ENCODE measurements at regions of chr1 and their contacts with region 1.

Region 1: GRCh38 chr1:62841587-62842169 is 57.7 kb downstream of the ATG4C start:
- DNase-seq: peak; percentile 49
- ATAC-seq: peak; percentile 63
- H3K4me3 ChIP-seq: no peak overlapping the region
- H3K27ac ChIP-seq: no peak overlapping the region
- H3K4me1 ChIP-seq: no peaks in the 10 kb centered on the region
- H3K27me3 ChIP-seq: no peaks in the 10 kb centered on the region
- CTCF ChIP-seq: peak; percentile 47 to 69 (median 48); a peak in 5 of 6 replicates
- POLR2A ChIP-seq: no peak
- RAD21 ChIP-seq: peak; percentile 72

Region 2: GRCh38 chr1:62781841-62782543 is 59.7 kb before region 1 on chr1:
- CTCF ChIA-PET with region 1: no interaction called
- POLR2A ChIA-PET with region 1: no interaction called
- RAD21 ChIA-PET with region 1: no interaction called
- intact Hi-C with region 1: no loop called
- DNase-seq: no peak
- ATAC-seq: no peak
- H3K4me3 ChIP-seq: no peak overlapping the region
- H3K27ac ChIP-seq: no peak overlapping the region
- H3K4me1 ChIP-seq: peaks cover 0 to 11% of the 10 kb centered on the region in 2 experiments; a peak in 2 of 4 replicates
- H3K27me3 ChIP-seq: no peaks in the 10 kb centered on the region
- CTCF ChIP-seq: no peak
- POLR2A ChIP-seq: no peak
- RAD21 ChIP-seq: no peak

Region 3: DNA sequence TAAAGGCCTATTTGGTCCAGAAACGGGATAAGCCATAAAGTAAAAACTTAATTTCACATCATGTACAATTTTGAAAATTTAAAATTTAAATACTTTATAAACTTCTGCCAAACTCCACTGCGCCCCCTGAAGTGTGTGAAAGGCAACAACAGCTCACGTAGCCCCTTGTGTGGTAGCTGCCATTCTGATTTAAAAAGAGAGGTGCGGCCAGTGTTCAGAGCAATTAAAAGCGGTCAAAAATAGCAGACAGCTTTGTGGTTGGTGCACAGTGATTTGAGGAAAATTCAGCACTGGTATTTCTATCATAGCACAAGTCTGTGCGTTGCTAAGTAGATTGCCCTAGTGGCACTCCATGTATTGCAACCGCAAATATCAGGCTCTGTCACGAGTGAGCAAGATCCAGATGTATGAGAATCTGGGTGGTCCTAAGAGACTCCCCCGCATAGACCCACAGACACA is 64.8 kb after region 1 on chr1:
- CTCF ChIA-PET with region 1: interaction called, 17 read pairs
- POLR2A ChIA-PET with region 1: no interaction called
- RAD21 ChIA-PET with region 1: interaction called in 1 of 2 experiments, 3 read pairs
- intact Hi-C with region 1: no loop called
- DNase-seq: peak; percentile 21
- ATAC-seq: peak; percentile 93
- H3K4me3 ChIP-seq: no peak overlapping the region
- H3K27ac ChIP-seq: no peak overlapping the region
- H3K4me1 ChIP-seq: no peaks in the 10 kb centered on the region
- H3K27me3 ChIP-seq: no peaks in the 10 kb centered on the region
- CTCF ChIP-seq: peak; percentile 62 to 82 (median 78)
- POLR2A ChIP-seq: no peak
- RAD21 ChIP-seq: peak; percentile 27; the same call in 1 of the 2 replicates

Region 4: DNA sequence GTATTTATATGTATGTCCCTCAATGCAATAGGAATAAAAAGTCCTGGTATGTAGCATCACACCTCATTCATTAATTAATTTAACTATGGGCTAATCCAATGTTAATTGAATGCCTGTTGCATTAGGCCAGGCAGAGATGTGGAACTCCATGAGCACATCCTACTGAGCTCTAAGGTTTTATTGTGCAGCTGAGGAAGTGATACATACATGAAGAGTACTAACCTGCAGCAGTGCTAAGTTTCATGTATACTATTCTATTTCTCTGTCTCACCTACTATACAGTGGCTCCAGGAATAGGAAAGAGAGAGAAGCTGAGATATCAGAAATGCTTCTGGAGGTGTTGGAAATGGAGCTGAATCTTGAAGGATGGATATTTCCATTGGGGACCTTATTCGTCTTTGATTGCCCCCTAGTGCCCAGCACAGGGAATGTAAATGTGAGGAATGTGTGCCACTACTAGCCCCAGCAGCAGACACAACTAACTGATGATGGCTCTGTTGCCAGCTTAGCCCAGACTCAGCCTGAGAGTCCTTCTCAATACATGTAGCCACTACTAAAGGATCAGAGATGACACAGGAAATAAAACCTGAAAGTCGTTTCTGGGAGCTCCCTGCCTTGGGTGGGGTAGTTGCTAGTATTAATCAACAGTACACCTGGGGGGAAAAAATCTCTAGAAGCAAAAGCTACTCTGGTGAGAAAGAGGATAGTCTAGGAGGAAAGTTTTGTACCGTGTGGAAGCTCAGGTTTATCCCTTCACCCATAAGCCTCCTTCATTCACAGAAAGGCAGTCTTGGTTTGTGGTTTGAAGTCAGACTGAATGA is 307.4 kb after region 1 on chr1:
- CTCF ChIA-PET with region 1: interaction called, 12 read pairs
- POLR2A ChIA-PET with region 1: no interaction called
- RAD21 ChIA-PET with region 1: interaction called in 1 of 2 experiments, 3 read pairs
- intact Hi-C with region 1: loop called (anchors 10 kb)
- DNase-seq: peak; percentile 40
- ATAC-seq: peak; percentile 97
- H3K4me3 ChIP-seq: no peak overlapping the region
- H3K27ac ChIP-seq: no peak overlapping the region
- H3K4me1 ChIP-seq: no peaks in the 10 kb centered on the region
- H3K27me3 ChIP-seq: peaks cover 45% of the 10 kb centered on the region
- CTCF ChIP-seq: peak; percentile 48 to 79 (median 79); a peak in 5 of 6 replicates
- POLR2A ChIP-seq: no peak
- RAD21 ChIP-seq: peak; percentile 65

Region 5: DNA sequence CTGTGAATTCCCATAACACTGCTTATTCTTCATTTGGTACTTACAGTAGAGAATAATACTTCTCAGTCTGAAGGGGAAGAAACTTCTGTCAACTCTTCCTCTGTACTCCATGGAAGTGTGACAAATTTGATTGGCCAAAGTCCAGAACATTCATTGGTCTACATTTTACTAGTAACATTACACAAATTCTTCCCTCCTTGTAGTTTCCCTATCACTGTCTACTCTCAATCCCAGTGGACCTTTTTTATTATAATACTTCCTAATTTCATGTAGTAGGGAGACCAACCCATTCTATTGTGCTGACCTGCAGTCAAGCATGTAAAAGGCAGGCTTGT is 600.4 kb after region 1 on chr1:
- CTCF ChIA-PET with region 1: no interaction called
- POLR2A ChIA-PET with region 1: no interaction called
- RAD21 ChIA-PET with region 1: no interaction called
- intact Hi-C with region 1: loop called (anchors 10 kb)
- DNase-seq: no peak
- ATAC-seq: no peak
- H3K4me3 ChIP-seq: no peak overlapping the region
- H3K27ac ChIP-seq: no peak overlapping the region
- H3K4me1 ChIP-seq: no peaks in the 10 kb centered on the region
- H3K27me3 ChIP-seq: no peaks in the 10 kb centered on the region
- CTCF ChIP-seq: no peak
- POLR2A ChIP-seq: no peak
- RAD21 ChIP-seq: no peak

Region 6: GRCh38 chr1:63537940-63538339 is 696.3 kb after region 1 on chr1:
- CTCF ChIA-PET with region 1: interaction called, 4 read pairs
- POLR2A ChIA-PET with region 1: no interaction called
- RAD21 ChIA-PET with region 1: interaction called in 1 of 2 experiments, 3 read pairs
- intact Hi-C with region 1: loop called (anchors 5 kb)
- DNase-seq: no peak
- ATAC-seq: no peak
- H3K4me3 ChIP-seq: no peak overlapping the region
- H3K27ac ChIP-seq: no peak overlapping the region
- H3K4me1 ChIP-seq: no peaks in the 10 kb centered on the region
- H3K27me3 ChIP-seq: no peaks in the 10 kb centered on the region
- CTCF ChIP-seq: peak; percentile 15 to 60 (median 56); a peak in 2 of 6 replicates
- POLR2A ChIP-seq: no peak
- RAD21 ChIP-seq: peak; percentile 67

Measured in HCT116 (cell line).